AG04449 (cell line): ENCODE measurements at regions of chr22 and their contacts with region 1.

Region 1: GRCh38 chr22:41491374-41492100 is 22.6 kb downstream of the ACO2 start:
- DNase-seq: no peak
- H3K4me3 ChIP-seq: no peak overlapping the region
- CTCF ChIP-seq: no peak

Region 2: DNA sequence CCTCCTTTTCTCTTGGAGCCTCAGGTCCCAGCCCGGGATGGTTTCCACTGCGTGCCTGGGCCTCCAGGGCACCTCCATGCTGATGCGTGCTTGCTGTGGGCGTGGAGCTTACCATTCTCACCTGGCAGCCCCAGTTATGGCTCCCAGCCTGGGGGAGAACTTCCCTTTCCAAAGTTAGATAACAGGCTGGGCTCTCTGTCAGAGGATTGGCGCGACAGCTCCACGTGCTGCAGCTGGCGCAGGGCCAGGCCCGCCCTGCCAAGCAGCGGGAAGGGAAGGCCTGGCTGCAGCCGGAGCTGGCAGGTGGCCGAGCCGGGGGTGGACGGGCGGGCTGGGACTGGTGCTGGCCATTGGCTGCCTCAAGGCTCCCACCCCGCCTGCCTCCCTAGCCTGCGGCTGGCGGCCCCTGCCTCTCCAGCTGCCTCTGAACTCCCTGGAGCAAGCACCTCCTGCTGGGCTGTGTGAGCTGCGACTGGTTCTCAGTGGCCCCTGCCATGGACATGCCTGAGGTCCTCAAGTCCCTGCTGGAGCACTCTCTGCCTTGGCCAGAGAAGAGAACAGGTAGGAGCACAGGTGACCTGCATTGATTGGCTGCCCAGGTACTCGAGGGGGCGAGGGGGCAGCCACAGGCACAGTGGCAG is 124.4 kb before region 1 on chr22:
- CTCF ChIA-PET with region 1: no interaction called
- POLR2A ChIA-PET with region 1: no interaction called
- DNase-seq: peak; percentile 56
- H3K4me3 ChIP-seq: peak overlapping the region; percentile 41
- CTCF ChIP-seq: peak; percentile 48

Region 3: GRCh38 chr22:41479671-41480396 is 11.7 kb before region 1 on chr22:
- CTCF ChIA-PET with region 1: interaction called, 11 read pairs
- POLR2A ChIA-PET with region 1: no interaction called
- DNase-seq: no peak
- H3K4me3 ChIP-seq: no peak overlapping the region
- CTCF ChIP-seq: peak; percentile 4

Region 4: DNA sequence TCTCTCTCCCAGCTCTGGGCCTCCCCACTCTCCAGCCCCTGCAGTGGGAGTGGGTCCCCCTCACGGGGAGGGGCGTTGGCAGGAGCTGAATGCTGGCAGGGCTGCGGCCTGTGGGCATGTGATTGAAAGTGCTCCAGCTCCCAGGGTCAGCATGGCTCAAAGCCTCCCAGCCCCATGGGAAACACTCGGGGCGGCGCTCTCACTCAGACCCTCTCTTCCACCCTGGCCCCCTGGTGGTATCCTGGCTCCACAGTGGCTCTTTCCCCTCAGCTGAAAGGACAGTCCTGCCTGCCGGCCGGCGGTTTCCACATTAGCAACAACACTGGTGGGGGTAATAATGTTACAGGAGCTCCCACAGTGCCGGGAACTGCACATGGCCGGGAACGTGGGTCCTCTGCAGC is 17.2 kb after region 1 on chr22:
- CTCF ChIA-PET with region 1: no interaction called
- POLR2A ChIA-PET with region 1: no interaction called
- DNase-seq: no peak
- H3K4me3 ChIP-seq: no peak overlapping the region
- CTCF ChIP-seq: no peak